Activated CD4-positive, alpha-beta T cell treated with anti-CD3 and anti-CD28 coated beads for 36 hours (primary cell): ENCODE measurements at regions of chr17 and their contacts with region 1.

Region 1: DNA sequence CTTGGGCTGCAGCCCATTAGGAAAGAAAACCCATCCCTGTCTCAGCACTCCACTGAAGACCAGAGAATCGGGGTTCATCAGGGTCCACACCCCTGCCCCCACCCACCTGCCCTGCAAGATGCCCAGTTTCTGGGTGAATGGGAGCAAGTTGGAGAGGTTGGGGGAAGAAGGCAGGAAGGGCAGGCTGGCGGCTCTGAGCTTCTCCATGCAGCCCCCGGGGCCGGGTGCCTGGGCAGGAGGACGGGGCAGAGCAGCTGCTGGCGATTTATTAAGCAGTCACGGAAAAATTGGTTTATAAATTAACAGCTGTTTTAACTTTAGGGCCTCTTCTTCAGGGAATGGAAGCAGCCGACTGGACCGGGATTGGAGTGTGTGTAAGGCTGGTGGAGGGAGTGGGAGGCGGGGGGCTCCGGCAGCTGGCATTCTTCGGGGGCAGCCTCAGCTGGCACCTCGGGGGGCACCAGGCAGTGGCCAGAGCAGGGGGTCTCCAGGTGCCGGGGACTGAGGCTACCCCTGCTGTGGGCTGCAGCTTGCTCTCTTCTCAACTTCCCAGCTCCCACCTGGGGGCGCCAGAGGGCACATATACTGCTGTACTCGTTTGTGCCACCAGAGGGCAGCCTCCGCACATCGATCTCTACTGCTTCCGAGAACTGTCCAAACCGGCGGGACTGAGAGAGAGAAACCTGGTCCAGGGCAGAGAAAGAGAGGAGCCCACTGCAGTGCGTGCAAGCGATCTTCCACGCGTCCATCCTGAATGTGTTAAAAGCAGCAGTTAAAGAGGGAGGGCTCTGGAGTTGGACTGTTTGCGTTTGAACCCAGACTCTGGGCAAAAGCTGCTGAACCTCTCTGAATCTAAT is 5.0 kb upstream of the PPP1R1B start:
- DNase-seq: peak; percentile 91
- ATAC-seq: peak; percentile 68
- H3K4me3 Mint-ChIP-seq: peak overlapping the region; percentile 62
- H3K27ac Mint-ChIP-seq: peak overlapping the region; percentile 91
- H3K4me1 Mint-ChIP-seq: peaks cover 26% of the 10 kb centered on the region
- H3K27me3 Mint-ChIP-seq: peaks cover 18% of the 10 kb centered on the region

Region 2: GRCh38 chr17:39057701-39058206 is 564.0 kb before region 1 on chr17:
- CTCF ChIA-PET with region 1: no interaction called
- POLR2A ChIA-PET with region 1: no interaction called
- intact Hi-C with region 1: no loop called
- DNase-seq: no peak
- ATAC-seq: no peak
- H3K4me3 Mint-ChIP-seq: peak overlapping the region; percentile 67
- H3K27ac Mint-ChIP-seq: no peak overlapping the region
- H3K4me1 Mint-ChIP-seq: peaks cover 15% of the 10 kb centered on the region
- H3K27me3 Mint-ChIP-seq: no peaks in the 10 kb centered on the region

Region 3: DNA sequence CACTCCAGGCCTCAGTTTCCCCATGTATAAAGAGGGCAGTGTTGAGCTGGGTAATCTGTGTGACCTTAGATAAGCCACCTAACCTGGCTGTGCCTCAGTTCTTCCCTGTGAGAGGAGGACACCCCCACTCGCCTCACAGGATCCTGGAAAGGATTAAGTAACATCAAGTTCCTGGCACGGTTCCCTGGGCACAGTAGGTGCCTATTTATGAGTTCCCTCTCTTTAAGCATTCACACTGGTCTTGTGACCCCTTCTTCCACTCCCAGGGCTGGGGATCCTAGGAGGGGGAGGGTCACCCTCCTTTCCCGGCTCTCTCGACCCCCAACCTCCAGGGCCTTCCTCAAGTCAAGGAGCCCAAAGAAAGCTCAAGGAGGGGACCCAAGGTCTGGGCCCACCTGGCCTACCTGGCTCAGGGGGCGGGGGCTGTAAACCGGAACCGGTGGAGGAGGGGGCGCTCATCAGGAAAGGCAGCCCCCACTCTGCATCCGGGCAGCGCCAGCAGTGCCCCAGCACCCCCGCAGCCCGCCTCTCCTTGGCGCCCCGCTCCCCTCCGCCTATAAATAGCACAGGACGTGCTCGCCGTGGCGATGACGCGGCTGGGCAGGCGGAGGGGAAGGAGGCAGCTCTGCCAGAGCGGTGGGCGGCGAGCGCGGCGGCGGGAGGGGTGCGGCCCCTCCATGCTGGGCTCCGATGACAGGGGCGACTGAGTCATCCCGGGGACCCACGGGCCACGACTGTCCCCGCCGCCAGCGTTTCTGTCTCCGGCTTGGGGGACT is 412.2 kb before region 1 on chr17:
- CTCF ChIA-PET with region 1: interaction called, 4 read pairs
- POLR2A ChIA-PET with region 1: no interaction called
- intact Hi-C with region 1: loop called (anchors 5 to 10 kb)
- DNase-seq: peak; percentile 89
- ATAC-seq: peak; percentile 76
- H3K4me3 Mint-ChIP-seq: peak overlapping the region; percentile 38
- H3K27ac Mint-ChIP-seq: peak overlapping the region; percentile 24
- H3K4me1 Mint-ChIP-seq: peaks cover 32% of the 10 kb centered on the region
- H3K27me3 Mint-ChIP-seq: no peaks in the 10 kb centered on the region

Region 4: GRCh38 chr17:39252788-39253460 is 368.8 kb before region 1 on chr17:
- CTCF ChIA-PET with region 1: no interaction called
- POLR2A ChIA-PET with region 1: no interaction called
- intact Hi-C with region 1: no loop called
- DNase-seq: no peak
- ATAC-seq: no peak
- H3K4me3 Mint-ChIP-seq: no peak overlapping the region
- H3K27ac Mint-ChIP-seq: no peak overlapping the region
- H3K4me1 Mint-ChIP-seq: no peaks in the 10 kb centered on the region
- H3K27me3 Mint-ChIP-seq: no peaks in the 10 kb centered on the region

Region 5: GRCh38 chr17:39485555-39485954 is 136.2 kb before region 1 on chr17:
- CTCF ChIA-PET with region 1: no interaction called
- POLR2A ChIA-PET with region 1: no interaction called
- intact Hi-C with region 1: no loop called
- DNase-seq: no peak
- ATAC-seq: no peak
- H3K4me3 Mint-ChIP-seq: no peak overlapping the region
- H3K27ac Mint-ChIP-seq: no peak overlapping the region
- H3K4me1 Mint-ChIP-seq: peaks cover 6% of the 10 kb centered on the region
- H3K27me3 Mint-ChIP-seq: no peaks in the 10 kb centered on the region

Region 6: GRCh38 chr17:39556427-39556826 is 65.3 kb before region 1 on chr17:
- CTCF ChIA-PET with region 1: interaction called, 12 read pairs
- POLR2A ChIA-PET with region 1: no interaction called
- intact Hi-C with region 1: no loop called
- DNase-seq: no peak
- ATAC-seq: no peak
- H3K4me3 Mint-ChIP-seq: no peak overlapping the region
- H3K27ac Mint-ChIP-seq: no peak overlapping the region
- H3K4me1 Mint-ChIP-seq: no peaks in the 10 kb centered on the region
- H3K27me3 Mint-ChIP-seq: no peaks in the 10 kb centered on the region

Region 7: DNA sequence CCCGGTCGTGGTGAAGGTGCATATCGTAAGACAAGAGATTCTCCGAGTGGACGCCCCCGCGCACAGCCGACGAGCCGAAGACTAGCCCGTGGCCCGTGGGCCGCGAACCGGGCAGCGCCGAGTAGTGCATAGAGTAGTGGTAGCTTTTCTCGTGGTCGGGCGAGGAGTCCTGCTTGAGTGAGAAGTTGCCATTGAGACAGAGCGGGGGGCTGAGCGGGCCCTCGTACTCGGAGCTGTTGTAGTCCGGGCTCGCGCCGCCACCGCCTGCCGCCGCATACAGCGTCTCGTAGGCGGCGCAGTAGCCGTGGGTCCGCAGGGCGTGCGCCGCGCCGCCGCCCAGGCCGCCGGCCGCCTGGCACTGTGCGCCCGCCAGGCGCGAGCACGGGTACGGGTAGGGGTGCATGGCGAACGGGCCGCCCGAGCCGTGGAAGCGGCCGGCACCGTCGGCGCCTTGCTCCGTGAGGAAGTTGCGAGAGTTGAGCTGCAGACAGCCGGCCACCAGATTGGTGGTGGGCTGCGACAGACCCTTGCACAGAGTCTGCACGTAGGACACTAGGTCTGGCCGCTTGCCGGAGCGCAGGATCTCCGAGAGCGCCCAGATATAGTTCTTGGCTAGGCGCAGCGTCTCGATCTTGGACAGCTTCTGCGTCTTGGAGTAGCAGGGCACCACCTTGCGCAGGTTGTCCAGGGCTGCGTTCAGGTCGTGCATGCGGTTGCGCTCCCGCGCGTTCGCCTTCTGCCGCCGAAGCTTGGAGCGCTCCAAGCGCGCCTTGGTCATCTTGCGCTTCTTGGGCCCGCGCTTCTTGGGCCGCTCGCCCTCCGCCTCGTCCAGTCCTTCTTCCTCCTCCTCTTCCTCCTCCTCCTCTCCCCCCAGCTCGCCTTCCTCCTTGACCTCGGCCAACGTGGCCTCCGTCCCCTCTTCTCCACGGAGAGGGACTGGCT is 16.0 kb before region 1 on chr17:
- CTCF ChIA-PET with region 1: interaction called, 30 read pairs
- POLR2A ChIA-PET with region 1: no interaction called
- intact Hi-C with region 1: no loop called
- DNase-seq: peak; percentile 49
- ATAC-seq: no peak
- H3K4me3 Mint-ChIP-seq: no peak overlapping the region
- H3K27ac Mint-ChIP-seq: no peak overlapping the region
- H3K4me1 Mint-ChIP-seq: peaks cover 21% of the 10 kb centered on the region
- H3K27me3 Mint-ChIP-seq: peaks cover 61% of the 10 kb centered on the region

Region 8: GRCh38 chr17:39668199-39668966 is 46.6 kb after region 1 on chr17 and contains the start of gene PNMT:
- CTCF ChIA-PET with region 1: interaction called, 20 read pairs
- POLR2A ChIA-PET with region 1: no interaction called
- intact Hi-C with region 1: loop called in 1 of 2 experiments (anchors 1 kb)
- DNase-seq: peak; percentile 87
- ATAC-seq: peak; percentile 79
- H3K4me3 Mint-ChIP-seq: peak within 1 kb of the TSS; percentile 50
- H3K27ac Mint-ChIP-seq: no peak within 1 kb of the TSS
- H3K4me1 Mint-ChIP-seq: peaks cover 10% of the 10 kb centered on the region
- H3K27me3 Mint-ChIP-seq: peaks cover 13% of the 10 kb centered on the region
- total RNA-seq, gene PNMT: not detected

Region 9: GRCh38 chr17:40026816-40027613 is 405.3 kb after region 1 on chr17:
- CTCF ChIA-PET with region 1: interaction called, 4 read pairs
- POLR2A ChIA-PET with region 1: no interaction called
- intact Hi-C with region 1: loop called in 1 of 2 experiments (anchors 1 kb)
- DNase-seq: peak; percentile 86
- ATAC-seq: peak; percentile 94
- H3K4me3 Mint-ChIP-seq: no peak overlapping the region
- H3K27ac Mint-ChIP-seq: no peak overlapping the region
- H3K4me1 Mint-ChIP-seq: peaks cover 22% of the 10 kb centered on the region
- H3K27me3 Mint-ChIP-seq: no peaks in the 10 kb centered on the region